ENCODE measurements at regions of chr20 and their contacts with region 1.

Region 1: DNA sequence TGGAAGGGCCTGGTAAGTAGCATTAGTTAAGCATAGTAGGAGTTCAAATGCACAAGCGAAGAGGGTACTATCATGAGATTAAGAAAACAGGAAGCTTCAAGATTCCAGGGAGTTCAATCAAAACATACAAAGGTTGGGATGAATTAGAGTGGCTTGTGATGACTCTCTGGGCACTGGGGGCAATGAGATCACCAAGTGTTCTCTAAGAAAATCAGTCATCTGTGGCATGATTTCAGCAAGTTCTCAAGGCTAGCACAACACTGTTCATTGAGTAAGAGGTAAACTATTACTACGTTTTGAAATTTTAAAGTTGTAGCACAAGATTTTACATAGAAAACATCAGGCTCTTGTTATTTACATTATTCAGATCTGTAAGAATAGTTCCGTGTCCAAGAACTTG is 139.7 kb upstream of the FLRT3 start:
- DNase-seq: no peak

Region 2: DNA sequence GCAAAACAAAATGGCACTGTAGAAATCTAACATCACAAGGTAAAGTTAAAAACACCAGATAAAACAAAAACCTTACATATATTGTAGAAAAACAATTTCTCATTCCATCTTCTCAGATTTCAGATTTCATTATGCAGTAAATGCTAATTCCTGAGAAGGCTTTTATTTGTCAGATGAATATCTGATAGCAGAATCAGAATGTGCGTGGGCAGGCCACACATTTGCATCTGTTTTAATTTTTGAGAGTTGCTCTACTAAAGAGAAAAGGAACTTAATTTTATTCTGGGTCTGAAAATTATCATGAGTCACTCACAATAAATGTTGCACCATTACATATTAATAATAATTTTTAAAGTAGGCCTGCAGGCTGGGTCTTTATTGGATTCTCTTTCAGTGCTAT is 1797.7 kb before region 1 on chr20:
- intact Hi-C with region 1: loop called in 1 of 2 experiments (anchors 10 kb)
- DNase-seq: no peak